ENCODE measurements at regions of chr16 and their contacts with region 1.

Region 1: GRCh38 chr16:67935402-67936123 is 1.1 kb downstream of the PSMB10 start:
- DNase-seq: peak; percentile 98
- ATAC-seq: peak; percentile 85
- H3K4me3 Mint-ChIP-seq: peak overlapping the region; percentile 100
- H3K27ac Mint-ChIP-seq: peak overlapping the region; percentile 99
- H3K4me1 Mint-ChIP-seq: peaks cover 44% of the 10 kb centered on the region
- H3K27me3 Mint-ChIP-seq: no peaks in the 10 kb centered on the region

Region 2: DNA sequence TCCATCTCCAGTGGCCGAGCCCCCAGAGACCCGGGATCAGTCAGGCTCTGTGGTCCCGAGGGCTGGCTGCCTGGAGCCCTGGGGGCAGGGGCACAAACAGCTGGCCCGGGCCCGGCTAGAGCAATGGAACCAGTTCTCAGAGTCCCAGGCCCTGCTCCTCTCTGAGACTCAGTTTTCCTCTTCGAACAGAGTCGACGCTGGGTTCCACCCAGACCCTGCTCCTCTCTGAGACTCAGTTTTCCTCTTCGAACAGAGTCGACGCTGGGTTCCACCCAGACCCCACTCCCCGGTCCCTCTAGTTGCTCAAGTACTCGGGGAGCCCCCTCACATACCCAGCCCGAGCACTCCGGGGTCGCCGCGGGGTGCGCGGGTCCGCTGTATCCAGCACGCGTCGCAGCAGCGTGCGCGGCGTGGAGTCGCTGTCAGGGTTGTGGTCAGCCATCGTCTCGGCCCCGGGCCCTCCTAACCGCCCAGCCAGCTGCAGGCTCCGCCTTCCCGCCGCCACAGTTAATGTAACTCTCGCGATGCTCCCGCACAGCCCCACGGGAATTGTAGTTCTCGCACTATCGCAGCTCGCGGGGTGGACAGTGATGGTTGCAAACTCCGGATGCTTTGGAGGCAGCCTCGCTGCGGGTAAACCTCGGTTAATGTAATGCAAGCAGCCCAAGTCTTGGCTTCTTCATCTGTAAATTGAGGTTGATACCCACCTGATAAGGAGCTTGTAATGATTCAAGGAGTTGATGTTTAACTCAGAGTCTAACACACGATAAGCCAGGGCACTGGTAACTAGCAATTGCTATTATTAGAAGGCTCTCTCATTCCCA is 101.9 kb before region 1 on chr16:
- CTCF ChIA-PET with region 1: no interaction called
- POLR2A ChIA-PET with region 1: interaction called, 10 read pairs
- DNase-seq: peak; percentile 97
- ATAC-seq: peak; percentile 98
- H3K4me3 Mint-ChIP-seq: peak overlapping the region; percentile 92
- H3K27ac Mint-ChIP-seq: peak overlapping the region; percentile 88
- H3K4me1 Mint-ChIP-seq: peaks cover 11% of the 10 kb centered on the region
- H3K27me3 Mint-ChIP-seq: no peaks in the 10 kb centered on the region

Region 3: DNA sequence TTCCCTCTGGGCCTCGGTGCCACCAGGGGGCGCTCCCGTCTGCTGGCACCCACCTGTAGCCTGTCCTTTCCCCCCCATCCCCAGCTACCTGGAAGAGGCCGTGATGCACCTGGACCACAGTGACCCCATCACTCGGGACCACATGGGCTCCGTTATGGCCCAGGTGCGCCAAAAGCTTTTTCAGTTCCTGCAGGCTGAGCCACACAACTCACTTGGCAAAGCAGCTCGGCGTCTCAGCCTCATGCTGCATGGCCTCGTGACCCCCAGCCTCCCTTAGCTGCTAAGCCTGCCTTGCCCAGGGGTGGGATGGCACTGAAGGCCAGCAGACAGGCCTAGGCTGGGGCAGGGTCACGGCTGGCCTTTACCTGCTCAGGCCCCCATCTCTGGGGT is 51.7 kb before region 1 on chr16:
- CTCF ChIA-PET with region 1: interaction called, 12 read pairs
- POLR2A ChIA-PET with region 1: interaction called, 7 read pairs
- DNase-seq: peak; percentile 76
- ATAC-seq: peak; percentile 81
- H3K4me3 Mint-ChIP-seq: no peak overlapping the region
- H3K27ac Mint-ChIP-seq: no peak overlapping the region
- H3K4me1 Mint-ChIP-seq: no peaks in the 10 kb centered on the region
- H3K27me3 Mint-ChIP-seq: no peaks in the 10 kb centered on the region

Region 4: GRCh38 chr16:67910158-67910557 is 25.4 kb before region 1 on chr16:
- CTCF ChIA-PET with region 1: interaction called, 5 read pairs
- POLR2A ChIA-PET with region 1: interaction called, 13 read pairs
- DNase-seq: peak; percentile 69
- ATAC-seq: peak; percentile 97
- H3K4me3 Mint-ChIP-seq: no peak overlapping the region
- H3K27ac Mint-ChIP-seq: peak overlapping the region; percentile 64
- H3K4me1 Mint-ChIP-seq: peaks cover 17% of the 10 kb centered on the region
- H3K27me3 Mint-ChIP-seq: no peaks in the 10 kb centered on the region

Region 5: DNA sequence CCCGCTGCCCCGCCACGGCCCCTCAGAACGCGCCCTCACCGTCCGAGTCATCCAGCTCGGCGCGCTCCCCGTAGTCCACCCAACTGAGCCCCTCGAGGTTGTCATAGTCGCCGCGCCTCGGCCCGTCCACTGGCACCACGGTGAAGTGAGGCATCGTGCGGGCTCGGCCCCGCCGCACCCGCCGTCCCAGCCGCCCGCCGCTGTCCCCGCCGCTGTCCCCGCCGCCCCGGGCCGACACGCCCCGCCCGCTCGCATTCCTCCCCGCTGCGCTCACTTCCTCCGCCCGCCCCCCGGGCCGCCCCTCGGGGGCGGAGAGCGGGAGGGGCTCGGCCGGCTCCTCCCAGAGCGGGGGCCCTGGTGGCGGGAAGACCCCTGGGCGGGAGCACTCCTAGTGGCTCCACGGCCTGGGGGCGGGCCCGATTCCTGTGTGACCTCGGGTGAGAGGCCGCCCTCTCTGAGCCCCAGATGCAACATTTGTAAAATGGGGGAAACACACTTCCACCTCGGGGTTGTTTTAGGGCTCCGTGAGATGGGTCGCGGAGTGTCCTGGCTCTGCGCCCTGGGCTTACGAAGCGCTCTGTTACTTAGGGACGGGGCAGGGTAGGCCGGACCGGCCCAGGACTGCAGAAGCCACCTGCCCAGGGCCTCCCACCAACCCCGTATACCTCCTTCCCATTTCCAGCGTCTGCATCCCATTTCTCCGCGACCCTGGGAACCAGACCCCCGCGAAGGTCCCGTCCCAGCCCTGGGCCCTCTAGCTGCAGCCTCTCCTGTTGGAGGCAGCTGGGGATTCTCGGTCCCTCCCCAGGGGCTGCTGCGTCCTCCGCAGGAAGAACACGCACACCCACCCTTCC is 33.1 kb after region 1 on chr16 and contains the start of gene SLC12A4:
- CTCF ChIA-PET with region 1: interaction called, 7 read pairs
- POLR2A ChIA-PET with region 1: interaction called, 25 read pairs
- DNase-seq: peak; percentile 93
- ATAC-seq: peak; percentile 88
- H3K4me3 Mint-ChIP-seq: peak within 1 kb of the TSS; percentile 98
- H3K27ac Mint-ChIP-seq: peak within 1 kb of the TSS; percentile 98
- H3K4me1 Mint-ChIP-seq: peaks cover 38% of the 10 kb centered on the region
- H3K27me3 Mint-ChIP-seq: no peaks in the 10 kb centered on the region
- total RNA-seq, gene SLC12A4: 42.5 TPM

Region 6: GRCh38 chr16:68128577-68129305 is 193.2 kb after region 1 on chr16:
- CTCF ChIA-PET with region 1: no interaction called
- POLR2A ChIA-PET with region 1: no interaction called
- DNase-seq: no peak
- ATAC-seq: no peak
- H3K4me3 Mint-ChIP-seq: no peak overlapping the region
- H3K27ac Mint-ChIP-seq: peak overlapping the region; percentile 20
- H3K4me1 Mint-ChIP-seq: peaks cover 52% of the 10 kb centered on the region
- H3K27me3 Mint-ChIP-seq: no peaks in the 10 kb centered on the region